ENCODE measurements at regions of chr3 and their contacts with region 1.

Region 1: GRCh38 chr3:48151058-48151806 is 37.0 kb downstream of the CDC25A start:
- DNase-seq: peak; percentile 67 to 84
- H3K4me3 ChIP-seq: no peak overlapping the region
- H3K27ac ChIP-seq: peak overlapping the region in 1 of 2 donors; percentile 28
- H3K4me1 ChIP-seq: peaks cover 0 to 19% (median 8%) of the 10 kb centered on the region in 4 donors
- H3K27me3 ChIP-seq: no peaks in the 10 kb centered on the region
- CTCF ChIP-seq: peak; percentile 79 to 83

Region 2: DNA sequence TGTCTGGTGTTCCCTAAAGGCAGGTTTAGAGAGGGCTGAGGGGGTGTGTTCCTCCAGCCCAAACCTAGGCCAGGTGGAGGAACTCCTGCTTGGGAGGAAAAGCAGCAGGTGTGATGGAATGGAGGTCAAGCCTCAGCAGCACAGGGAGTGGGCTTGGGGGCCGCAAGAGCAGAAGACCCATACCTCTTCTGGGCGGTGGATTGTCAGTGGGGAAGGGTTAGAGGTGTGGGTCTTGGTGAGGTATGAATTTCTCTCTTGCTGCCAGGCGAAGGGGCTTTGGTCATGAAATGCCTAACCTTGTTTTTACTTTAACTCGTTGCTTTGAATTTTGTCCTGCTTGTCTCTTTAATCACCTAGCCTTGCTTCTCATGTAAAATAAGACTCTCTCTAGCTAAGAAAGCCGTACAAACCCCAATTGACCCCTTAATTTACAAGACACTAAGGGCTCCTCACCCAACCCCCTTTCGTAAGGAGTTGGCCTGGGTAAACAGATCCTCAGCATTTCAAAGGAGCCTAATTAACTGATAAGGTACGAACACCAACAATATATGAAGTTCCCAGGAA is 309.4 kb before region 1 on chr3:
- intact Hi-C with region 1: loop called (anchors 5 kb)
- DNase-seq: no peak
- H3K4me3 ChIP-seq: no peak overlapping the region
- H3K27ac ChIP-seq: no peak overlapping the region
- H3K4me1 ChIP-seq: no peaks in the 10 kb centered on the region
- H3K27me3 ChIP-seq: no peaks in the 10 kb centered on the region
- CTCF ChIP-seq: no peak

Region 3: DNA sequence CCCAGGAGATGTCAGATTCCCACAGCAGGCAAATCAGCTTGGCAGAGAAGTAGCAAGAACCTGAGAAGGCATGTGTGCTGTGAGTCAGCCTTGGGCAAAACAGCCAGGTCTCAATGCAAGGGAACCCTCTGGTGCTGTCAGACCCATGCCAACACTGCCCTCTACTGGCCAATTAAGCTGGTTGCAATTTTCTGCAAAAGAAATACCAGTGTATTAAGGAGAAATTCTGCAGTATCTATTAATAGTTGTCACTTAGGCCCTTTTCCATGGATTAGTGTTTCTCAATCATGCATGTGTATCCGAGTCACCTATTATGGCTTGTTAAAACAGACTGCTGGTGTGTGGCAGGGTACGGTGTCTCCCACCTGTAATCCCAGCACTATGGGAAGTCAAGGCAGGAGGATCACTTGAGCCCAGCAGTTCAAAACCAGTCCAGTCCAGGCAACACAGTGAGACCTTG is 161.2 kb before region 1 on chr3:
- intact Hi-C with region 1: loop called (anchors 10 kb)
- DNase-seq: peak; percentile 88 to 91
- H3K4me3 ChIP-seq: no peak overlapping the region
- H3K27ac ChIP-seq: peak overlapping the region; percentile 36 to 42
- H3K4me1 ChIP-seq: peaks cover 0 to 30% (median 15%) of the 10 kb centered on the region in 4 donors
- H3K27me3 ChIP-seq: no peaks in the 10 kb centered on the region
- CTCF ChIP-seq: peak; percentile 88 to 93

Region 4: GRCh38 chr3:49358217-49358883 is 1207.1 kb after region 1 on chr3 and contains the start of gene GPX1:
- intact Hi-C with region 1: no loop called
- DNase-seq: peak; percentile 96 to 97
- H3K4me3 ChIP-seq: peak within 1 kb of the TSS; percentile 75 to 84
- H3K27ac ChIP-seq: peak within 1 kb of the TSS; percentile 86 to 92
- H3K4me1 ChIP-seq: peaks cover 0 to 41% (median 23%) of the 10 kb centered on the region in 4 donors
- H3K27me3 ChIP-seq: no peaks in the 10 kb centered on the region
- CTCF ChIP-seq: no peak

Measured in tibial artery (tissue), 4 donors.